ENCODE measurements at regions of chr2 and their contacts with region 1.

Region 1: DNA sequence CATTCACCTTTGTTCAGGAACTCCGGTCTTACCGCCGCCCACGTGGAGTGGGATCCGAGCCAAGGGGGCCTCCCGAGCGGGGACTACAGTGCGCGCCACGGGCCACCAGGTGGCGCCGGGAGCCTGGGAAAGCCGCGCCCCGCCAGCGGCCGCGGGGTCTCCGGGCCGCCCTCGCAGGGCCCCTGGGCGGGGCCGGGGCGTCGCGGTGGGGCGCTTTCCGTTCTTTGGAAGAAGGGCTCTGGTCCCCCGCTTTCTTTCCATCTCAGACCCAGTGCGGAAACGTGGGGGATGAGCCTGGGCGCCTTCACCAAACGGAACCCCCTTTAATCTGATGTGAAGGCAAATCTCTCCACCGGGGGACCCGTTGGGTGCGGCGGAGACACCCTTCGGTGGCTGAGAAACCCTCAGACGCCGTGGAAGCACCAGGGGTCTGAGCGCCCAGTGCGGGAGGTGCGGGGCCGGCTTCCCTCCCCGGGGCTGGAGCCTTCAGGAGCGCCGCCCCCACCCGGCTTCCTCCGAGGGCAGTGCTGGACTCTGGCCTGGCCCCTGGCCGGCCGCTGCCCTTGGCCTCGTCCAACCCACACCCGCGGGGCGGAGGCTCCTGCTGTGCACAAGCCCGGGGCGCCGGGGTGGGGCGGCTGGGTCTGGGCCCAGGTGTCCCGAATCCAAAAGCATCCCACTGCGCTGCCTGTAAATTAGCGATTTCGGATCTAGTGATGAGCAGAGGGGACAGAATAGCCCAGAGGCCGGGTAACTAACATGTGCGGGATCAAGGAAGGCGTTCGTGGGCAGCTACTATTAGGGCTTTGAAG is 44.6 kb downstream of the GORASP2 start:
- DNase-seq: peak; percentile 90
- ATAC-seq: peak; percentile 96
- H3K4me3 Mint-ChIP-seq: peak overlapping the region; percentile 87
- H3K27ac Mint-ChIP-seq: peak overlapping the region; percentile 81
- H3K4me1 Mint-ChIP-seq: peaks cover 15% of the 10 kb centered on the region
- H3K27me3 Mint-ChIP-seq: no peaks in the 10 kb centered on the region
- CTCF ChIP-seq: peak; percentile 80

Region 2: GRCh38 chr2:170928824-170929685 is 44.6 kb before region 1 on chr2 and contains the start of gene GORASP2:
- CTCF ChIA-PET with region 1: interaction called, 14 read pairs
- POLR2A ChIA-PET with region 1: interaction called, 7 read pairs
- intact Hi-C with region 1: loop called (anchors 1 kb)
- DNase-seq: peak; percentile 96
- ATAC-seq: peak; percentile 93
- H3K4me3 Mint-ChIP-seq: peak within 1 kb of the TSS; percentile 90
- H3K27ac Mint-ChIP-seq: peak within 1 kb of the TSS; percentile 88
- H3K4me1 Mint-ChIP-seq: peaks cover 38% of the 10 kb centered on the region
- H3K27me3 Mint-ChIP-seq: no peaks in the 10 kb centered on the region
- CTCF ChIP-seq: peak; percentile 75
- total RNA-seq, gene GORASP2: 60.7 and 69.7 TPM in 2 replicates

Region 3: GRCh38 chr2:171325886-171326585 is 352.3 kb after region 1 on chr2:
- CTCF ChIA-PET with region 1: no interaction called
- POLR2A ChIA-PET with region 1: no interaction called
- intact Hi-C with region 1: loop called (anchors 1 kb)
- DNase-seq: no peak
- ATAC-seq: peak; percentile 64
- H3K4me3 Mint-ChIP-seq: peak overlapping the region; percentile 82
- H3K27ac Mint-ChIP-seq: peak overlapping the region; percentile 92
- H3K4me1 Mint-ChIP-seq: peaks cover 87% of the 10 kb centered on the region
- H3K27me3 Mint-ChIP-seq: no peaks in the 10 kb centered on the region
- CTCF ChIP-seq: no peak

Region 4: GRCh38 chr2:171433763-171434670 is 460.3 kb after region 1 on chr2 and contains the starts of genes DCAF17 and METTL8:
- CTCF ChIA-PET with region 1: interaction called, 4 read pairs
- POLR2A ChIA-PET with region 1: interaction called, 7 read pairs
- intact Hi-C with region 1: loop called (anchors 1 kb)
- DNase-seq: peak; percentile 91
- ATAC-seq: peak; percentile 92
- H3K4me3 Mint-ChIP-seq: peak within 1 kb of the TSS; percentile 90
- H3K27ac Mint-ChIP-seq: peak within 1 kb of the TSS; percentile 94
- H3K4me1 Mint-ChIP-seq: peaks cover 24% of the 10 kb centered on the region
- H3K27me3 Mint-ChIP-seq: no peaks in the 10 kb centered on the region
- CTCF ChIP-seq: no peak
- total RNA-seq, gene DCAF17: 23.1 and 23.5 TPM in 2 replicates
- total RNA-seq, gene METTL8: 16.5 and 22.9 TPM in 2 replicates

Region 5: DNA sequence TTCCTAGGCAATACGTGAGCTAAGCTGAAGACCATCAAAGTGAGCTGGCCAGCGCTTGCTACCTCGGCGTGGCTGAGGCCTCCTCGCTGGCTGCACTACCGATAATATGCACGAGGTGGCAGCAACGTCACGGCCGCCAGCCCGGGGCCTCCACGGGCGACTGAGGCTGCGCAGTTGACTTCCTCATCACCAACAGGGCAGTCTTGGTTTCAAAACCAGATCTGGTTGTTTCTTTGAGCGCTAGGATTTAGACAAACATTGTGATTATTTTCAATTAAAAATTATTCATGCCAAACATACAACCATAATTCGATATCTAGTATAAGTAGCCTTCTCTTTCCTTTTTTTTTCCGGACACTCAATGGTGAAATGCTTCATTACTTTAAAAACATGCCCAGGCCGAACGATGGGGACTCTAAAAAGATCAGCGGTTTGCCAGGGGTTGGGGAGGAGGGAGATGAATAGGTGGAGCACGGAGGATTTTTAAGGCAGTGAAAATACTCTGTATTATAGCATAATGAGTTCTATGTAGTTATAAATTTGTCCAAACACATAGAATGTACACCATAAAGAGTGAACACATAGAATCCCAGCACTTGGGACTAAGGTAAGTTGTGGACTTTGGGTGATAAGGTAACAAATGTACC is 600.6 kb after region 1 on chr2:
- CTCF ChIA-PET with region 1: no interaction called
- POLR2A ChIA-PET with region 1: no interaction called
- intact Hi-C with region 1: loop called (anchors 1 kb)
- DNase-seq: peak; percentile 81
- ATAC-seq: peak; percentile 100
- H3K4me3 Mint-ChIP-seq: no peak overlapping the region
- H3K27ac Mint-ChIP-seq: peak overlapping the region; percentile 16
- H3K4me1 Mint-ChIP-seq: peaks cover 5% of the 10 kb centered on the region
- H3K27me3 Mint-ChIP-seq: no peaks in the 10 kb centered on the region
- CTCF ChIP-seq: peak; percentile 76

Region 6: GRCh38 chr2:171703574-171704347 is 730.1 kb after region 1 on chr2:
- CTCF ChIA-PET with region 1: interaction called, 3 read pairs
- POLR2A ChIA-PET with region 1: no interaction called
- intact Hi-C with region 1: loop called (anchors 10 kb)
- DNase-seq: no peak
- ATAC-seq: no peak
- H3K4me3 Mint-ChIP-seq: no peak overlapping the region
- H3K27ac Mint-ChIP-seq: no peak overlapping the region
- H3K4me1 Mint-ChIP-seq: peaks cover 18% of the 10 kb centered on the region
- H3K27me3 Mint-ChIP-seq: no peaks in the 10 kb centered on the region
- CTCF ChIP-seq: no peak

Region 7: GRCh38 chr2:171787333-171788072 is 813.8 kb after region 1 on chr2:
- CTCF ChIA-PET with region 1: no interaction called
- POLR2A ChIA-PET with region 1: no interaction called
- intact Hi-C with region 1: no loop called
- DNase-seq: no peak
- ATAC-seq: no peak
- H3K4me3 Mint-ChIP-seq: no peak overlapping the region
- H3K27ac Mint-ChIP-seq: no peak overlapping the region
- H3K4me1 Mint-ChIP-seq: no peaks in the 10 kb centered on the region
- H3K27me3 Mint-ChIP-seq: no peaks in the 10 kb centered on the region
- CTCF ChIP-seq: no peak

Region 8: GRCh38 chr2:172465417-172466334 is 1492.0 kb after region 1 on chr2:
- CTCF ChIA-PET with region 1: no interaction called
- POLR2A ChIA-PET with region 1: no interaction called
- intact Hi-C with region 1: loop called (anchors 10 kb)
- DNase-seq: no peak
- ATAC-seq: peak; percentile 74
- H3K4me3 Mint-ChIP-seq: no peak overlapping the region
- H3K27ac Mint-ChIP-seq: no peak overlapping the region
- H3K4me1 Mint-ChIP-seq: peaks cover 49% of the 10 kb centered on the region
- H3K27me3 Mint-ChIP-seq: peaks cover 2% of the 10 kb centered on the region
- CTCF ChIP-seq: peak; percentile 83